Right lobe of liver (tissue), 6 donors: ENCODE measurements at regions of chr5 and their contacts with region 1.

Region 1: GRCh38 chr5:134289509-134290113 is 63.7 kb upstream of the PPP2CA start:
- DNase-seq: peak in 1 of 3 donors; percentile 58
- ATAC-seq: peak; percentile 99 to 100 (median 100)
- H3K4me3 ChIP-seq: no peak overlapping the region
- H3K27ac ChIP-seq: no peak overlapping the region
- H3K4me1 ChIP-seq: no peaks in the 10 kb centered on the region
- H3K27me3 ChIP-seq: no peaks in the 10 kb centered on the region
- CTCF ChIP-seq: peak; percentile 64 to 90 (median 78)
- POLR2A ChIP-seq: no peak

Region 2: DNA sequence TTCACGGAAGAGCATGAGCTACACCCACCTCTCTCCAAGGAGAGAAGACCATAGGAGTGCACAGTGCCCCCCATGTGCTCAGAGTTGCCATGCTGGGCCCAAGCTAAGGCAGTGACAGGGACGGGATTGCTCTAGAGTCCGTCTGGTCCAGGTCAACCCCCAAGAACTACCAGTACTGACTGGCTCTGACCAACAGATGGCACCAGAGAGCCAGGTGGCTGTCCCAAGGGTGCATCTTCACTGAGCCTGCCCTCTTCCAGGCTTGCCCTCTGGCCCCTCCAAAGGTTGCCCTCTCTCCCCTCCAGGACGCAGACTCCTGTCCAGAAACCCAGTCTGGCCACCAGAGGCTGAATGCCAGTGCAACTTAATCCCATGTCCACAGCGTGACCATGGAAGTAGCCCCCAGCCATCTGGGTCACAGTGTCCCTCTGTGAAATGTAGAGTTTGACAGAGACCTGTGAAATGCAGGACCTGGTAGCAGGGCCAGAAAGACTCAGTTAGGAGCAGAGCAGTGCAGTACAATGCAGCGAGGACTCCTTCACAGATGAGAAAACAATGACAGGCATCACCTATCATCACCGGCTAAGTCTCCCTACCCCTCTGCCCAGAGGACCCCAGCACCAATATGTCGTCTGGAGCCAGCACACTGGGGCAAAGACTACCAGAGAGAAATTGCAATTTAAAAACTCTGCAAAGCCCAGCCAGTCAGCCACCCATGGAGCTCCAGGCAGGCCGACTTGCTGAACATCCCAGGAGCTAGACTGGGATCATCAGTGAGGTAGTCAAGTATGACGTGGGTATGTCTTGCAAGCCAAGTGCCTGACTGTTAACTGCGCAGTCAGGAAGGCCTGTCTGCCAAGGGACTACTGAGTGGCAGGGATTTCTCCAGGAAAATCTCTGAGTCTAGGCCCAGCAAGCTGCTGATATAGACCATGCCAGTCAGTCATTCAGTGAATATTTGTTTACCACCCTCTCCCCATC is 105.2 kb before region 1 on chr5:
- intact Hi-C with region 1: loop called (anchors 5 kb)
- DNase-seq: peak; percentile 69 to 79 (median 71)
- ATAC-seq: peak; percentile 93 to 96 (median 96)
- H3K4me3 ChIP-seq: no peak overlapping the region
- H3K27ac ChIP-seq: no peak overlapping the region
- H3K4me1 ChIP-seq: peaks cover 0 to 5% (median 0%) of the 10 kb centered on the region in 4 donors
- H3K27me3 ChIP-seq: no peaks in the 10 kb centered on the region
- CTCF ChIP-seq: peak; percentile 87 to 94 (median 89)
- POLR2A ChIP-seq: no peak